Naive thymus-derived CD4-positive, alpha-beta T cell (primary cell): ENCODE measurements at regions of chr6 and their contacts with region 1.

Region 1: GRCh38 chr6:34248727-34249551 is at the start of gene SMIM29:
- DNase-seq: peak; percentile 95 to 100 (median 97)
- ATAC-seq: peak; percentile 94
- H3K4me3 ChIP-seq: peak within 1 kb of the TSS; percentile 87
- H3K4me3 Mint-ChIP-seq: peak within 1 kb of the TSS; percentile 85 to 98 (median 94)
- H3K27ac ChIP-seq: peak within 1 kb of the TSS; percentile 95
- H3K27ac Mint-ChIP-seq: peak within 1 kb of the TSS; percentile 85 to 97 (median 95)
- H3K4me1 ChIP-seq: peaks cover 13 to 15% of the 10 kb centered on the region in 2 donors
- H3K4me1 Mint-ChIP-seq: peaks cover 13 to 42% (median 26%) of the 10 kb centered on the region in 7 donors
- H3K27me3 ChIP-seq: no peaks in the 10 kb centered on the region
- H3K27me3 Mint-ChIP-seq: peaks cover 0 to 10% (median 0%) of the 10 kb centered on the region in 5 donors
- total RNA-seq, gene SMIM29: 13.9 to 24.2 (median 22.5) TPM

Region 2: GRCh38 chr6:34223956-34224940 is 24.7 kb before region 1 on chr6:
- CTCF ChIA-PET with region 1: interaction called, 7 read pairs
- POLR2A ChIA-PET with region 1: interaction called, 24 read pairs
- intact Hi-C with region 1: loop called (anchors 1 kb)
- DNase-seq: peak; percentile 85 to 97 (median 91)
- ATAC-seq: peak; percentile 99
- H3K4me3 ChIP-seq: peak overlapping the region; percentile 78
- H3K4me3 Mint-ChIP-seq: peak overlapping the region; percentile 42 to 85 (median 76)
- H3K27ac ChIP-seq: peak overlapping the region; percentile 93
- H3K27ac Mint-ChIP-seq: peak overlapping the region; percentile 82 to 95 (median 88)
- H3K4me1 ChIP-seq: peaks cover 4 to 14% of the 10 kb centered on the region in 2 donors
- H3K4me1 Mint-ChIP-seq: peaks cover 5 to 40% (median 10%) of the 10 kb centered on the region in 7 donors
- H3K27me3 ChIP-seq: no peaks in the 10 kb centered on the region
- H3K27me3 Mint-ChIP-seq: no peaks in the 10 kb centered on the region

Region 3: GRCh38 chr6:34414999-34415858 is 166.3 kb after region 1 on chr6:
- CTCF ChIA-PET with region 1: interaction called, 64 read pairs
- POLR2A ChIA-PET with region 1: interaction called, 22 read pairs
- intact Hi-C with region 1: loop called (anchors 1 kb)
- DNase-seq: peak in 7 of 9 donors; percentile 38 to 63 (median 56)
- ATAC-seq: peak; percentile 88
- H3K4me3 ChIP-seq: no peak overlapping the region
- H3K4me3 Mint-ChIP-seq: no peak overlapping the region
- H3K27ac ChIP-seq: no peak overlapping the region
- H3K27ac Mint-ChIP-seq: peak overlapping the region in 4 of 9 donors; percentile 17 to 56 (median 45)
- H3K4me1 ChIP-seq: no peaks in the 10 kb centered on the region
- H3K4me1 Mint-ChIP-seq: peaks cover 0 to 17% (median 9%) of the 10 kb centered on the region in 7 donors
- H3K27me3 ChIP-seq: no peaks in the 10 kb centered on the region
- H3K27me3 Mint-ChIP-seq: no peaks in the 10 kb centered on the region

Region 4: GRCh38 chr6:34459899-34460593 is 211.1 kb after region 1 on chr6:
- CTCF ChIA-PET with region 1: no interaction called
- POLR2A ChIA-PET with region 1: no interaction called
- intact Hi-C with region 1: loop called in 1 of 2 experiments (anchors 1 kb)
- DNase-seq: peak in 8 of 9 donors; percentile 23 to 55 (median 50)
- ATAC-seq: peak; percentile 82
- H3K4me3 ChIP-seq: no peak overlapping the region
- H3K4me3 Mint-ChIP-seq: no peak overlapping the region
- H3K27ac ChIP-seq: no peak overlapping the region
- H3K27ac Mint-ChIP-seq: no peak overlapping the region
- H3K4me1 ChIP-seq: no peaks in the 10 kb centered on the region
- H3K4me1 Mint-ChIP-seq: peaks cover 0 to 2% (median under 1%) of the 10 kb centered on the region in 7 donors
- H3K27me3 ChIP-seq: no peaks in the 10 kb centered on the region
- H3K27me3 Mint-ChIP-seq: peaks cover 4 to 24% (median 17%) of the 10 kb centered on the region in 5 donors

Region 5: DNA sequence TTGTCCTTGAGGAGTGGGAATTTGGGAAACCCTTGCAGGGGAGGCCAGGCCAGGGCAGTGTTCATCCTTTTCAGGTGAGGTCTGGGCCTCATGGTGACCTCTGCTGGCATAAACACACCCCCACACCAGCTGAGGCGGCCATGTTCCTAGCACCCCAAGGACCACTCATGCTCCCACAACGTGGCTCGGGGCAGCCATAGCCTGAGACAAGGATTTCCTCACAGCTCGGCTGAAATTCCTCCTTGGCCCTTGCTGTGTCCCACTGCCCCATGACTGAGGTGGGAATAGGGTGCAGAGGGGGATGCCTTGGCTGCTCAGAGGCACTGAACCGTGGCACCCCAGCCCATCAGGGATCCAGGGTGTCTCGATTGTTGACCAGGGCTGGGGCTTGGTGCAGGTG is 334.5 kb after region 1 on chr6:
- CTCF ChIA-PET with region 1: no interaction called
- POLR2A ChIA-PET with region 1: no interaction called
- intact Hi-C with region 1: loop called in 1 of 2 experiments (anchors 1 kb)
- DNase-seq: no peak
- ATAC-seq: peak; percentile 60
- H3K4me3 ChIP-seq: no peak overlapping the region
- H3K4me3 Mint-ChIP-seq: no peak overlapping the region
- H3K27ac ChIP-seq: no peak overlapping the region
- H3K27ac Mint-ChIP-seq: peak overlapping the region in 2 of 9 donors; percentile 42 to 73
- H3K4me1 ChIP-seq: no peaks in the 10 kb centered on the region
- H3K4me1 Mint-ChIP-seq: peaks cover 0 to 11% (median 0%) of the 10 kb centered on the region in 7 donors
- H3K27me3 ChIP-seq: no peaks in the 10 kb centered on the region
- H3K27me3 Mint-ChIP-seq: no peaks in the 10 kb centered on the region

Region 6: GRCh38 chr6:35139908-35140655 is 891.1 kb after region 1 on chr6:
- CTCF ChIA-PET with region 1: no interaction called
- POLR2A ChIA-PET with region 1: no interaction called
- intact Hi-C with region 1: loop called in 1 of 2 experiments (anchors 5 kb)
- DNase-seq: peak in 6 of 9 donors; percentile 26 to 50 (median 42)
- ATAC-seq: peak; percentile 46
- H3K4me3 ChIP-seq: no peak overlapping the region
- H3K4me3 Mint-ChIP-seq: peak overlapping the region in 9 of 10 donors; percentile 1 to 76 (median 46)
- H3K27ac ChIP-seq: no peak overlapping the region
- H3K27ac Mint-ChIP-seq: peak overlapping the region in 2 of 9 donors; percentile 38 to 44
- H3K4me1 ChIP-seq: no peaks in the 10 kb centered on the region
- H3K4me1 Mint-ChIP-seq: peaks cover 13 to 22% (median 16%) of the 10 kb centered on the region in 7 donors
- H3K27me3 ChIP-seq: no peaks in the 10 kb centered on the region
- H3K27me3 Mint-ChIP-seq: peaks cover 8 to 35% (median 13%) of the 10 kb centered on the region in 5 donors